Prostate gland (tissue), 2 donors: ENCODE measurements at regions of chr3 and their contacts with region 1.

Region 1: DNA sequence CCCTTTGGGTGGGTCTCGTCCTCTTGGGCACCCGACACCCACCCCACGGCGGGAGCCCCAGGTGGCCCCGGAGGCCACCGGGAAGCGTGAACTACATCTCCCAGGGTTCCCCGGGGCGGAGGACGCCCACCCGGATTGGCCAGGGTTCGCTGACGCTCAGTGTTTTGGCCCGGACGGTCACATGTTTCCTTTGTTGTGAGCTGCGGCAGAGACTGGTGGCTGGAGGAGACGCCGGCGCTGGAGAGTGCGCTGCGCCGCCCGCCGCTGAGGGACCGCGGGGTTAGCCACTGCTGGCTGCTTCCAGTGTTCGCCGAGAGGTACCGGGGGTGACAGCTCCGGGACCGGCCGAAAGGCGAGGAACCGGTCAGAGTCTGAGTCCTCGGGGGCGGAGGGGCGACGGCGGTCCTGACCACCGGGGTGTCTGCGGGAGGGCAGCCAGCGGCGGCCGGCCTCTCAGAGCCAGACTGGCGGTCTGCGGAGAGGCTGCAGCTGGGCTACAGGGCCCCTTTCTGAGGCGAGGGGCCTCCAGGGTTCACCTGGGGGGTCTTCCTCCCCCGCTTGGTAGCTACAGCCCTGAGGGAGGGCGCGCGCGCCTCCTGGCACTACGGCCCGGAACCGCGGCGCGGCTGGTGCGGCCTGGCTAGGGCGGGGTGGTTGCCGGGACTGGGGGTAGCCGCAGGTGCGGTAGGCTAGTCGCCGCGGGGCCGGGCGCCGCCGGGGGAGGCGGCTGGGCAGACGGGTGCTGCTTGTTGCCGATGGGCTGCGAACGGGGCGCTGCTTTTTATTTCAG is at the start of gene KLHL24:
- DNase-seq: peak; percentile 95
- H3K4me3 ChIP-seq: peak within 1 kb of the TSS; percentile 91 to 95
- H3K27ac ChIP-seq: peak within 1 kb of the TSS; percentile 98 to 100
- H3K4me1 ChIP-seq: peaks cover 3% of the 10 kb centered on the region
- H3K27me3 ChIP-seq: no peaks in the 10 kb centered on the region
- CTCF ChIP-seq: peak in 2 of 4 experiments; percentile 16 to 19
- POLR2A ChIP-seq: peak; percentile 100
- total RNA-seq, gene KLHL24: 69.5 to 79.2 TPM

Region 2: DNA sequence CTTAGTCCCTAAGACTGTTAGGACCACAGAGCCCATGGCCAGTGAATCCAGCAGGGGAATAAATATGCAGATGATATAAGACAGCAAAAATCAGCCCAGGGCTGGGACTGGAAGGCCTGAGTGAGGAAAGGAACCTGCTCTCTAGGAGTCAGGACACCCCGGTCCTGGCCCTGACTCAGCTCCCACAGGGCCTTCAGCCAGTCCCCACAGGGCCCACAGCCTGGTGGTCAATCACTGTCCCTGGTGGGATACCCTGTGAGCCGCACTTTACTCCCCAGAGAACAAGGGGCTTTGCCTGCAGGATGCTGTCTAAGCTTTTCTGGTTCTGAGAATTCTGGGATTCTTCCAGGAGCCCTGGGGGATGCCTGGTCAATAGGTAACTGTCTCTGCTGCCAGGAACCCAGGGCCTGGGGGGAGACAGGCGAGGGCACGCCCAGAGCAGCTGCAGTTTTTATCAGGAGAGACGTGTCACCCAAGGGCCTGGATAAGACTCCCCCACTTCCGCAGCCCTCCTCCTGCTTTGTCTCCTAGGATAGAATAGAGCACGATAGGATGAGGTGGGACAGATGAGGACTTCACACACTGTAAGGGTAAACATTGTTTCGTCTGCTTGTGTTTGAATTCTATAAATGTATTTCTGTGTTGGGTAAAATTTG is 157.7 kb before region 1 on chr3:
- intact Hi-C with region 1: loop called (anchors 10 kb)
- DNase-seq: no peak
- H3K4me3 ChIP-seq: no peak overlapping the region
- H3K27ac ChIP-seq: no peak overlapping the region
- H3K4me1 ChIP-seq: no peaks in the 10 kb centered on the region
- H3K27me3 ChIP-seq: no peaks in the 10 kb centered on the region
- CTCF ChIP-seq: no peak
- POLR2A ChIP-seq: no peak

Region 3: DNA sequence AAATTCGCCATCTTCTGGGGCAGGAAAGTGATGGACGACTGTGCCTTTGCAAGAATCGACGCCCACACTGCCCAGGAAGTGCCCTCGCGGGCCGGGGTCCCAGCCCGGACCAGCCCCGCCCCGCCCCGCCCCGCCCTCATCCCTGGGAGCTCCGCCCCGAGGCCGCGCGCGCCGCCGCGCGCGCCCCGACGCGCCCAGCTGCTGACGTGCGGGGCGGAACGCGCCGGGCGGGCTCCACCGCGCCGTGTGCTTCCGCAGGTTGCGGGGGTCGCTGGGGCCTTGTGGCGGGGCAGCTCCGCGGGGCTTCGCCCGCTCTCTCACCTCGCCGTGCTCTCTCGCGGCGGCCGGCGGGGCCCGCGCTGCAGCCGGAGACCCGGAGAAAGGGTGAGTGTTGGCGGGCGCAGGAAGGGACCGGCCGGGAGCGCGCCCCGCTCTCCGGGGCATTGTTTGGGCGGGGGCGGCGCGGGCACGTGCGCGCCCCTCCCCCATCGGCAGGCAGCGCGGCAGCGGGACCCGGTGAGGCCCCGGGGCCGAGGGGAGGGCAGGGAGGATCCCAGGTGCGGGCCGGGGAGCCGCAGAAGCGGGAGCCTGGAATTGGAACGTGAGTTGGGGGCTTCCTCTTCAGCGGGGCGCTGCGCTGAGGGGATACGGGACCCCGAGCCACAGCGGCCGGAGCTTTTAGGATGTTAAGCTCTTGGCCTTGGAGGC is 62.1 kb after region 1 on chr3 and contains the start of gene YEATS2:
- intact Hi-C with region 1: loop called (anchors 5 kb)
- DNase-seq: peak; percentile 43
- H3K4me3 ChIP-seq: peak within 1 kb of the TSS; percentile 86 to 96
- H3K27ac ChIP-seq: peak within 1 kb of the TSS; percentile 88
- H3K4me1 ChIP-seq: peaks cover 5% of the 10 kb centered on the region
- H3K27me3 ChIP-seq: no peaks in the 10 kb centered on the region
- CTCF ChIP-seq: no peak
- POLR2A ChIP-seq: peak; percentile 54
- total RNA-seq, gene YEATS2: 24.1 to 24.8 TPM